Heart right ventricle (tissue), 16 donors: ENCODE measurements at regions of chr1 and their contacts with region 1.

Region 1: DNA sequence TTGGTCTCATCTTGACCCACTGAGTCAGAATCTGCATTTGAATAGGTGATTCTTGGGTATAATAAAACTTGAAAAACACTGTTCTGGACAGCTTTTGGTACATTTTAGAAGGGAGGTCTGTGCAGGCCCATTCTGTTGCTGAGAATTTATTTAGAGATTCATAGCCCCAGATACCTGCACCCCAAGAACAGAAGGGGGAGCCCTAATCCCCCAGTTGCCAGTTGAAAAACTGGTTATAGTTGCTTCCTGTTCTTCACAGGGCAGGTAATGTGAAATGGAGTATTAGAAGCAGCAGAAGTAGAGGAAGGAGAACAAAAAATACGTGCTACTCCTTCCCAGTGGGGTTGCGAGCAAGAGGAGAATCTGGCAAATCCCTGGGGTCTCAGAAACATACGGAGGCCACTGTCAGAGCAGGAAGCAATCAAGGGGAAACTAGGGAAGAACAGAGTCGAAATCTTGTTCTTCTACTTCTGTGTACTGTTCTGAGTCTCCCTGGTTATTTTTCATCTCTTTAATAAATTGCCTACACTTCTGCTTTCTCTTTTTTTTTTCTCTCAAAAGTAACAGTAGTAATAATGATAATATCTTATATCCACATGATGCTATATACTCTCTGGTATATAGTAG is 4.6 kb upstream of the CLCA2 start:
- DNase-seq: peak in 1 of 2 donors; percentile 23
- ATAC-seq: peak in 1 of 8 donors; percentile 58
- H3K4me3 ChIP-seq: no peak overlapping the region
- H3K27ac ChIP-seq: no peak overlapping the region
- H3K4me1 ChIP-seq: peaks cover 0 to 7% (median 0%) of the 10 kb centered on the region in 9 donors
- H3K27me3 ChIP-seq: no peaks in the 10 kb centered on the region
- CTCF ChIP-seq: peak in 6 of 9 donors; percentile 36 to 63 (median 54)

Region 2: DNA sequence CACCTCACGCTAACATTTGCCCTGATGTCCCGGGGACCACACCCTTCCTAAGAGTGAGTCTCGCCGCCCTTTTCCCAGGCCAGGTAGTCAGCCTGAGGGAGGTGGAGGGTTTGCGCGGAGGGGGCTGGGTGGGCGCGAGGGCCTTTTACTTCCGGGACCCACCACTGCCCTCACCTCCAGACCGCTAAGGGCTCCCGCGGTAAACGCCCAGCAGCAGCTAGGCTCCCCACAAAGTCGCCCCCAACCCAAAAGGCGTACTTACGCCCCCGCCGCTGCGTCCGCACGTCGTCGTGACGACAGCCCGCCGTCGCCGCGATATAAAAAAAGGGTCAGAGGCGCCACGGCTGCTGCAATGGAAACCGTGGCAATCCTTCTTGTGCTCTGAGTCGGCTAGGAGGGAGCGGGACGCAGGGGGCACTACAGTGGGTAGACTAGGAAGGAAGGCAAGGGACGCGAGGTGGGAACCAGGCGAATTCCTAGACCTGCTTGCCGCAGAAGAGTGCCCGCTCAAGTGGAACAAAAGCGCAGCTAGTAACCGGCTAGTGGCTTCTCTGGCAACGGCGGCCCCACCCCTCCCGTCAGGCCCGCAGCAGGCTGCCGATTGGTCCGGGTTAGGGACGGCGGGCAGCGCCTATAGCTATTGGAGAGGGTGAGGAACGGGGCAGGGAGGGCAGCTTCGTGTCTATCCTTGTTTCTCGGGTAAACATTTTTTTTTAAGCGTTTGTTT is 23.5 kb before region 1 on chr1 and contains the start of gene ODF2L:
- intact Hi-C with region 1: loop called in 1 of 10 experiments (anchors 2 kb)
- DNase-seq: peak; percentile 88 to 89
- ATAC-seq: peak; percentile 99 to 100 (median 100)
- H3K4me3 ChIP-seq: peak within 1 kb of the TSS; percentile 50 to 100 (median 90)
- H3K27ac ChIP-seq: peak within 1 kb of the TSS in 9 of 10 donors; percentile 54 to 90 (median 82)
- H3K4me1 ChIP-seq: peaks cover 0 to 33% (median 16%) of the 10 kb centered on the region in 9 donors
- H3K27me3 ChIP-seq: no peaks in the 10 kb centered on the region
- CTCF ChIP-seq: peak in 1 of 9 donors; percentile 12
- total RNA-seq, gene ODF2L: 6.2 to 15.2 (median 8.4) TPM